CD14-positive monocyte (primary cell): ENCODE measurements at regions of chr4 and their contacts with region 1.

Region 1: DNA sequence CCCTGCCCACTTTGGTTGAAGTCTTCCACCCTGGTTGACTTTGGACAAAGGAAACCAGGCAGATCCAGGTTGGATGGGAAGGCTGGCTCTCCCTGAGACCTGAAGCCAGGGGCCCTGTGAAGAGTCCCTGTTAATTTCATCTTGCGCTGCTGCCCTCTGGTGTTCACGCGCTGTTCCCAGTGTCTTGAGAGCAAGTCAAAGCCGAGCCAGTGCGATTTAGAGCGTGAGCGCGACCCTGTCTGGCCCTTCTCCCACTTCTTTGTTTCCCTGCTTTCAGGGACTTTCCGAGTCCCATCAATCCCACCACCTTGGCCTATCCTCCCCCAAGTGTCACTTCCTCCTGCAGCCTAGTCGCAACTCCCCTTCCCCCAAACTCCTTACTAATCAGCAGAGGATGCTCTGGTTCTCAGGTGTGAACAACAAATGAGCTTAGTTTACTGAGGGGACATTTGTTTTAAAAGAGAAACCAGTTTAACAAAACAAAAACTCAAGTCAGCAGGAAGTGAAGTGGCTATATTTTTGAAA is 25.8 kb upstream of the CHRNA9 start:
- DNase-seq: peak; percentile 74 to 85 (median 80)
- H3K4me3 ChIP-seq: no peak overlapping the region
- H3K4me3 Mint-ChIP-seq: peak overlapping the region; percentile 60 to 83
- H3K27ac ChIP-seq: peak overlapping the region in 1 of 2 donors; percentile 89
- H3K27ac Mint-ChIP-seq: peak overlapping the region; percentile 87 to 98 (median 97)
- H3K4me1 ChIP-seq: peaks cover 54 to 59% of the 10 kb centered on the region in 2 donors
- H3K4me1 Mint-ChIP-seq: peaks cover 64% of the 10 kb centered on the region
- H3K27me3 ChIP-seq: no peaks in the 10 kb centered on the region
- H3K27me3 Mint-ChIP-seq: peaks cover 7 to 16% (median 8%) of the 10 kb centered on the region in 3 donors
- CTCF ChIP-seq: peak; percentile 87

Region 2: DNA sequence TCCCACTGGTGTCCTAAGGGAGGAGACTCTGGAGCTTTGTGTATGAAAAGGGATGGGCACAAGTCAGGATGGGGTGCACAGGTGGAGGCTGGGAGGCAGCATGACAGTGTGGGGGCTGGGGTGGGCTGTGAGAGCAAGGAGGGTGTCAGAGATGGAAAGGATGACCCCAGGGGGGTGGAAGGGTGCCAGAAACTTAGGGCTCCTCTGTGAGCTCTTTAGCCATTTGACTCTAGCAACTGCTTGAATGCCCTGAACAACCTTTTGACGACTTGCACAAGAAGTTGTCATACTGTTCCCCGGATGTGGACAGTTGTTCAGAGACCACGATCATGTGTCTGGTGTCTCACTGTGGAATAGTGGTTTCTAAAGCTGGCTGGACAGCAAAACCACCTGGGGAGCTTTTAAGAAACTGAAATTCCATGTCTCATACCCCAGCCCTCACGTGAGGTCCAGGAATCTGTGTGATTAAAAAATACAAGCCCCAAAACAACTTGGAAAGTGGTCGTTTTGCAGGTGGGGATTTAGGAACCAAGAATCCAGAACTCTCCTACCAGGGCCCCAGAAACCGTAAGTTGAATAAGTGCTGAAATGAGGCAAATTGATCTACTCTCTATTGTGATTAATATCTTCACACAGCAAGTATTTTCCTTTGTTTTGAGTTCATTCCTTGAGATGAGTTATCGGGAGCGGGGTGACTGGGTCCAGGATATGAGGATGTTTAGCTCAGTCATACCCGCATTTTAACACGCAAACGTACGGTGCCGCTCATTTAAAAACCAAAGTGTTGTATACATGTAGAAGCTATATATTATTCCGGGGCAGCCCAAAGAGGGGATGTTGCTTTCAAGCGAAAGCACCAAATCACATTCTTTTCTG is 109.1 kb before region 1 on chr4:
- intact Hi-C with region 1: loop called in 1 of 2 experiments (anchors 5 kb)
- DNase-seq: peak; percentile 76 to 93 (median 82)
- H3K4me3 ChIP-seq: peak overlapping the region; percentile 25 to 71 (median 69)
- H3K4me3 Mint-ChIP-seq: peak overlapping the region; percentile 70 to 90
- H3K27ac ChIP-seq: peak overlapping the region; percentile 6 to 76
- H3K27ac Mint-ChIP-seq: peak overlapping the region; percentile 67 to 90 (median 84)
- H3K4me1 ChIP-seq: peaks cover 63 to 69% of the 10 kb centered on the region in 2 donors
- H3K4me1 Mint-ChIP-seq: peaks cover 70% of the 10 kb centered on the region
- H3K27me3 ChIP-seq: no peaks in the 10 kb centered on the region
- H3K27me3 Mint-ChIP-seq: peaks cover 0 to 4% (median 0%) of the 10 kb centered on the region in 3 donors
- CTCF ChIP-seq: no peak

Region 3: GRCh38 chr4:40241941-40242340 is 67.4 kb before region 1 on chr4:
- intact Hi-C with region 1: loop called in 1 of 2 experiments (anchors 5 kb)
- DNase-seq: peak; percentile 18 to 56 (median 44)
- H3K4me3 ChIP-seq: peak overlapping the region in 1 of 3 experiments; percentile 53
- H3K4me3 Mint-ChIP-seq: peak overlapping the region in 1 of 2 donors; percentile 79
- H3K27ac ChIP-seq: peak overlapping the region in 1 of 2 donors; percentile 74
- H3K27ac Mint-ChIP-seq: peak overlapping the region; percentile 52 to 94 (median 85)
- H3K4me1 ChIP-seq: peaks cover 26 to 40% of the 10 kb centered on the region in 2 donors
- H3K4me1 Mint-ChIP-seq: peaks cover 52% of the 10 kb centered on the region
- H3K27me3 ChIP-seq: no peaks in the 10 kb centered on the region
- H3K27me3 Mint-ChIP-seq: peaks cover 0 to 4% (median 3%) of the 10 kb centered on the region in 3 donors
- CTCF ChIP-seq: no peak

Region 4: DNA sequence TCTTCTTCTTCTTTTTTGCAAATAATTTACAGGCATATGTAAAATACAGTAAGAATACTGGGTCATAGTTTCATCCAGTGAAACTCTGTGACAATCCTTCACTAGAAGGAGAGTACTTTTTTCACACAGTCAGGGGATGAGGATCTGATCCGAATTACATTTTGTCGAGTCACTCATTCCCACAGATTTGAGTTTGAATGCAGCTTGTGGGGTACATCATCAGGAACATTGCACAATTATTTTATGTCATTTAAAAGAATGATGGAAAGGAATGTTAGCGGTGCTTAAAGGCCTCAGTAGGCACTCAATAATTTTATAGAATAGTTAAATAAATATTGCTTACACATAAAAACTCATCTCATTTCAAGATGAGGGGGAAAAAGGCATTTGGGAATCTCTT is 114.4 kb after region 1 on chr4:
- intact Hi-C with region 1: no loop called
- DNase-seq: no peak
- H3K4me3 ChIP-seq: no peak overlapping the region
- H3K4me3 Mint-ChIP-seq: no peak overlapping the region
- H3K27ac ChIP-seq: no peak overlapping the region
- H3K27ac Mint-ChIP-seq: peak overlapping the region in 1 of 7 donors; percentile 68
- H3K4me1 ChIP-seq: no peaks in the 10 kb centered on the region
- H3K4me1 Mint-ChIP-seq: peaks cover 5% of the 10 kb centered on the region
- H3K27me3 ChIP-seq: no peaks in the 10 kb centered on the region
- H3K27me3 Mint-ChIP-seq: peaks cover 0 to 3% (median 0%) of the 10 kb centered on the region in 3 donors
- CTCF ChIP-seq: no peak

Region 5: GRCh38 chr4:40788331-40788730 is 479.0 kb after region 1 on chr4:
- intact Hi-C with region 1: no loop called
- DNase-seq: no peak
- H3K4me3 ChIP-seq: peak overlapping the region in 1 of 3 experiments; percentile 3
- H3K4me3 Mint-ChIP-seq: no peak overlapping the region
- H3K27ac ChIP-seq: no peak overlapping the region
- H3K27ac Mint-ChIP-seq: no peak overlapping the region
- H3K4me1 ChIP-seq: peaks cover 11% of the 10 kb centered on the region in 2 donors
- H3K4me1 Mint-ChIP-seq: peaks cover 16% of the 10 kb centered on the region
- H3K27me3 ChIP-seq: no peaks in the 10 kb centered on the region
- H3K27me3 Mint-ChIP-seq: peaks cover 2 to 3% (median 2%) of the 10 kb centered on the region in 3 donors
- CTCF ChIP-seq: no peak